CD8-positive, alpha-beta T cell (primary cell): ENCODE measurements at regions of chr4 and their contacts with region 1.

Region 1: GRCh38 chr4:54064295-54065111 is at the start of gene CHIC2:
- DNase-seq: peak; percentile 94 to 99 (median 97)
- ATAC-seq: peak; percentile 86
- H3K4me3 ChIP-seq: peak within 1 kb of the TSS; percentile 91 to 99
- H3K4me3 Mint-ChIP-seq: peak within 1 kb of the TSS; percentile 96
- H3K27ac ChIP-seq: peak within 1 kb of the TSS; percentile 87 to 99
- H3K27ac Mint-ChIP-seq: peak within 1 kb of the TSS; percentile 99
- H3K4me1 ChIP-seq: peaks cover 35% of the 10 kb centered on the region
- H3K4me1 Mint-ChIP-seq: peaks cover 49% of the 10 kb centered on the region
- H3K27me3 ChIP-seq: no peaks in the 10 kb centered on the region
- H3K27me3 Mint-ChIP-seq: no peaks in the 10 kb centered on the region
- CTCF ChIP-seq: no peak
- total RNA-seq, gene CHIC2: 67.3 to 69.3 TPM

Region 2: DNA sequence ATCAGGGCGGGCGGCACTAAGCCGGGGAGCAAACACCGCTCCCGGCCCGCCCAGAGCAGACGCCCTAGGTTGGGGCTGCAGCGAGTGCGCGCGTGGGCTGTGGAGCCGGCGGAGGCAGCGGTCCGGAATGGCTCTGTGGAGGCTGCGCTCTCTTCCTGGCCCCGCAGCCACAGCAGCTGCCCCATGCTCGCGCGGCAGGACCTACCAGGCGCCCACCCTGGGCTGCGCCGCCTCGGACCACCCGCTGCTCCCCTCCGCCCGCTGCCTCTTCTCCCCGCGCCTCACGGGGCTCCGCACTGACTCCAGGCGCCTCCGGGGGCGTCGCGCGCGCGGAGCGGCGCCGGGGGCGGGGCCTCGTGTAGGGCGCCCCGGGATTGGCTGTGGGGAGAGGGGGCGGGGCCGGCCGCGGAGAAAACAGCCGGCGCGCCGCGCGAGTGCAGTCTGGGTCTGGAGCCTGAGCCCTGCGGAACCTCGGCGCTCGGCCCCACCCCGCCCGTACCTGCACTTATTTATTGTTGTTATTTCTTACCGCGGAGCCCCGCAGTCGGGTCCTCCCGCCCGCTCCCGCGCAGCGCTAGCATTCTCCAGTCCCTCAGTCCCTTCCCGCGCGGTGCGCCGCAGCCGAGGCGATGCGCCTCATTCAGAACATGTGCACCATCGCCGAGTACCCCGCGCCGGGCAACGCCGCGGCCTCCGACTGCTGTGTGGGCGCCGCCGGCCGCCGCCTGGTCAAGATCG is 1202.5 kb before region 1 on chr4 and contains the start of gene RASL11B:
- CTCF ChIA-PET with region 1: no interaction called
- POLR2A ChIA-PET with region 1: no interaction called
- intact Hi-C with region 1: loop called in 1 of 2 experiments (anchors 10 kb)
- DNase-seq: peak; percentile 67 to 89 (median 80)
- ATAC-seq: peak; percentile 99
- H3K4me3 ChIP-seq: peak within 1 kb of the TSS; percentile 52 to 65
- H3K4me3 Mint-ChIP-seq: peak within 1 kb of the TSS; percentile 72
- H3K27ac ChIP-seq: no peak within 1 kb of the TSS
- H3K27ac Mint-ChIP-seq: peak within 1 kb of the TSS; percentile 42
- H3K4me1 ChIP-seq: peaks cover 14% of the 10 kb centered on the region
- H3K4me1 Mint-ChIP-seq: peaks cover 5% of the 10 kb centered on the region
- H3K27me3 ChIP-seq: peaks cover 0 to 6% of the 10 kb centered on the region in 2 experiments
- H3K27me3 Mint-ChIP-seq: peaks cover 33% of the 10 kb centered on the region
- CTCF ChIP-seq: peak; percentile 33
- total RNA-seq, gene RASL11B: 0.64 TPM in 1 of 2 experiments, not detected in the other

Region 3: GRCh38 chr4:53994382-53995102 is 70.0 kb before region 1 on chr4:
- CTCF ChIA-PET with region 1: no interaction called
- POLR2A ChIA-PET with region 1: no interaction called
- intact Hi-C with region 1: loop called in 1 of 2 experiments (anchors 5 kb)
- DNase-seq: no peak
- ATAC-seq: no peak
- H3K4me3 ChIP-seq: no peak overlapping the region
- H3K4me3 Mint-ChIP-seq: no peak overlapping the region
- H3K27ac ChIP-seq: no peak overlapping the region
- H3K27ac Mint-ChIP-seq: no peak overlapping the region
- H3K4me1 ChIP-seq: no peaks in the 10 kb centered on the region
- H3K4me1 Mint-ChIP-seq: no peaks in the 10 kb centered on the region
- H3K27me3 ChIP-seq: no peaks in the 10 kb centered on the region
- H3K27me3 Mint-ChIP-seq: no peaks in the 10 kb centered on the region
- CTCF ChIP-seq: no peak

Region 4: GRCh38 chr4:54091637-54092404 is 27.3 kb after region 1 on chr4:
- CTCF ChIA-PET with region 1: no interaction called
- POLR2A ChIA-PET with region 1: interaction called, 7 read pairs
- intact Hi-C with region 1: loop called (anchors 1 kb)
- DNase-seq: peak; percentile 57 to 92 (median 81)
- ATAC-seq: peak; percentile 87
- H3K4me3 ChIP-seq: peak overlapping the region; percentile 64 to 78
- H3K4me3 Mint-ChIP-seq: peak overlapping the region; percentile 86
- H3K27ac ChIP-seq: no peak overlapping the region
- H3K27ac Mint-ChIP-seq: peak overlapping the region; percentile 7
- H3K4me1 ChIP-seq: peaks cover 31% of the 10 kb centered on the region
- H3K4me1 Mint-ChIP-seq: peaks cover 23% of the 10 kb centered on the region
- H3K27me3 ChIP-seq: peaks cover 26 to 40% of the 10 kb centered on the region in 2 experiments
- H3K27me3 Mint-ChIP-seq: peaks cover 42% of the 10 kb centered on the region
- CTCF ChIP-seq: no peak

Region 5: GRCh38 chr4:55345980-55346850 is 1281.7 kb after region 1 on chr4 and contains the start of gene SRD5A3:
- CTCF ChIA-PET with region 1: no interaction called
- POLR2A ChIA-PET with region 1: no interaction called
- intact Hi-C with region 1: loop called in 1 of 2 experiments (anchors 10 kb)
- DNase-seq: peak; percentile 57 to 89 (median 81)
- ATAC-seq: peak; percentile 85
- H3K4me3 ChIP-seq: peak within 1 kb of the TSS; percentile 68 to 88
- H3K4me3 Mint-ChIP-seq: peak within 1 kb of the TSS; percentile 86
- H3K27ac ChIP-seq: peak within 1 kb of the TSS; percentile 64 to 81
- H3K27ac Mint-ChIP-seq: peak within 1 kb of the TSS; percentile 85
- H3K4me1 ChIP-seq: peaks cover 9% of the 10 kb centered on the region
- H3K4me1 Mint-ChIP-seq: peaks cover 14% of the 10 kb centered on the region
- H3K27me3 ChIP-seq: no peaks in the 10 kb centered on the region
- H3K27me3 Mint-ChIP-seq: no peaks in the 10 kb centered on the region
- CTCF ChIP-seq: peak; percentile 97
- total RNA-seq, gene SRD5A3: 1.1 TPM

Region 6: GRCh38 chr4:55853484-55854046 is 1789.1 kb after region 1 on chr4 and contains the start of gene EXOC1:
- CTCF ChIA-PET with region 1: no interaction called
- POLR2A ChIA-PET with region 1: no interaction called
- intact Hi-C with region 1: loop called in 1 of 2 experiments (anchors 10 kb)
- DNase-seq: peak; percentile 90 to 98 (median 97)
- ATAC-seq: peak; percentile 96
- H3K4me3 ChIP-seq: peak within 1 kb of the TSS; percentile 96
- H3K4me3 Mint-ChIP-seq: peak within 1 kb of the TSS; percentile 36
- H3K27ac ChIP-seq: peak within 1 kb of the TSS; percentile 70 to 86
- H3K27ac Mint-ChIP-seq: peak within 1 kb of the TSS; percentile 64
- H3K4me1 ChIP-seq: peaks cover 40% of the 10 kb centered on the region
- H3K4me1 Mint-ChIP-seq: peaks cover 38% of the 10 kb centered on the region
- H3K27me3 ChIP-seq: no peaks in the 10 kb centered on the region
- H3K27me3 Mint-ChIP-seq: no peaks in the 10 kb centered on the region
- CTCF ChIP-seq: no peak
- total RNA-seq, gene EXOC1: 12.1 to 14.5 TPM